CD8-positive, alpha-beta memory T cell (primary cell): ENCODE measurements at regions of chr5 and their contacts with region 1.

Region 1: DNA sequence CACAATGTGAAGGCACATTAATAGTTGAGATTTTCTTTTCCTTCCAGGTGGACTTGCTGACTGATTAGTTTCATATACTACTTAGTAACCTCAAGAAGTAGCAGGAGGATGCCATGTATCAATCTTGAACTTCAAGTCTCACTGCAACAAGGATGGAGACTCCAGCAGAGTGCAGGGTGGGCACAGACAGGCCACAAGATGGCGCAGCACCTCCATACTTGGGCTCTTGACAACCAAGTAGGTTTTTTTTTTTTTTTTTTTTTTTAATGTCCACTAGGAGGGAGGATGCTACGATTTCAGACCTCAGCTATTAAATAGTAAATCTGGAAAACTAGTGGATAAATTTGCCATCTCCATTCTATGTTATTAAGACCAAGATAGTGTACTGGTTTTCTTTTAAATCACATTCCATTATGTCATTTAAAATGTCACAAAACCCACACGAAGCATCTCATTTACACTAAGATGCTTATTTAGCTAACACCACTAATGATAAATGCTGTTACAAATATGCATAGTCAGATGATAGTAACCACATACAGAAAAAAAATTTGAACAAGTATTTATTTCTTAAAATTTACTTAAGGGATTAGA is 58.6 kb downstream of the IL6ST start:
- DNase-seq: peak; percentile 59 to 82 (median 64)
- H3K4me3 ChIP-seq: no peak overlapping the region
- H3K4me3 Mint-ChIP-seq: no peak overlapping the region
- H3K27ac ChIP-seq: no peak overlapping the region
- H3K27ac Mint-ChIP-seq: peak overlapping the region in 1 of 8 donors; percentile 27
- H3K4me1 ChIP-seq: no peaks in the 10 kb centered on the region
- H3K4me1 Mint-ChIP-seq: no peaks in the 10 kb centered on the region
- H3K27me3 ChIP-seq: no peaks in the 10 kb centered on the region
- H3K27me3 Mint-ChIP-seq: peaks cover 0 to 2% of the 10 kb centered on the region in 2 donors

Region 2: GRCh38 chr5:56200856-56201666 is 264.9 kb after region 1 on chr5:
- CTCF ChIA-PET with region 1: interaction called, 29 read pairs
- POLR2A ChIA-PET with region 1: no interaction called
- DNase-seq: peak in 4 of 5 donors; percentile 12 to 63 (median 41)
- H3K4me3 ChIP-seq: no peak overlapping the region
- H3K4me3 Mint-ChIP-seq: no peak overlapping the region
- H3K27ac ChIP-seq: no peak overlapping the region
- H3K27ac Mint-ChIP-seq: peak overlapping the region in 1 of 8 donors; percentile 32
- H3K4me1 ChIP-seq: peaks cover 8% of the 10 kb centered on the region
- H3K4me1 Mint-ChIP-seq: peaks cover 0 to 12% (median 3%) of the 10 kb centered on the region in 3 donors
- H3K27me3 ChIP-seq: no peaks in the 10 kb centered on the region
- H3K27me3 Mint-ChIP-seq: no peaks in the 10 kb centered on the region